ENCODE measurements at regions of chr10 and their contacts with region 1.

Region 1: DNA sequence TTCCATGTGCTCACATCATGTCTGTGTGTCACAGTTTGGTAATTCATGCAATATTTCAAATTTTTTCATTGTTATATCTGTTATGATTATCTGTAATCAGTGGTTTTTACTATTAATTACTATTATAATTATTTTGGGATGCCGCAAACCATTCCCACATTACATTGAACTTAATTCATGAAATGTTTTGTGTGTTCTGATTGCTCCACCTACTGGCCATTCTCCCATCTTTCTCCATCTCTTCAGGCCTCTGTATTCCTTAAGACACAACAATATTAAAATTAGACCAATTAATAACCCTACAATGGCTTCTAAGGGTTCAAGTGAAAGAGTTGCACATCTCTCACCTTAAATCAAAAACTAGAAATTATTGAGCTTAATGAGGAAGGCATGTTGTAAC is 398.5 kb downstream of the PCDH15 start:
- DNase-seq: peak; percentile 11
- ATAC-seq: no peak
- H3K4me3 ChIP-seq: no peak overlapping the region
- H3K27ac ChIP-seq: no peak overlapping the region
- H3K4me1 ChIP-seq: no peaks in the 10 kb centered on the region
- H3K27me3 ChIP-seq: no peaks in the 10 kb centered on the region; a peak in 1 of 5 replicates
- CTCF ChIP-seq: peak; percentile 41
- EP300 ChIP-seq: no peak
- POLR2A ChIP-seq: no peak
- RAD21 ChIP-seq: no peak

Region 2: GRCh38 chr10:53997953-53998352 is 404.6 kb before region 1 on chr10:
- CTCF ChIA-PET with region 1: no interaction called
- POLR2A ChIA-PET with region 1: no interaction called
- in situ Hi-C with region 1: no loop called
- intact Hi-C with region 1: loop called (anchors 1 kb)
- DNase-seq: peak; percentile 5
- ATAC-seq: peak; percentile 56
- H3K4me3 ChIP-seq: no peak overlapping the region
- H3K27ac ChIP-seq: no peak overlapping the region
- H3K4me1 ChIP-seq: no peaks in the 10 kb centered on the region
- H3K27me3 ChIP-seq: no peaks in the 10 kb centered on the region
- CTCF ChIP-seq: peak; percentile 23; the same call in 1 of the 2 replicates
- EP300 ChIP-seq: no peak
- POLR2A ChIP-seq: no peak
- RAD21 ChIP-seq: no peak

Region 3: GRCh38 chr10:54133203-54133602 is 269.4 kb before region 1 on chr10:
- CTCF ChIA-PET with region 1: no interaction called
- POLR2A ChIA-PET with region 1: no interaction called
- in situ Hi-C with region 1: no loop called
- intact Hi-C with region 1: loop called (anchors 1 kb)
- DNase-seq: no peak
- ATAC-seq: no peak
- H3K4me3 ChIP-seq: no peak overlapping the region
- H3K27ac ChIP-seq: no peak overlapping the region
- H3K4me1 ChIP-seq: no peaks in the 10 kb centered on the region
- H3K27me3 ChIP-seq: no peaks in the 10 kb centered on the region
- CTCF ChIP-seq: peak; percentile 15; the same call in 1 of the 2 replicates
- EP300 ChIP-seq: no peak
- POLR2A ChIP-seq: no peak
- RAD21 ChIP-seq: no peak

Measured in HepG2 (cell line).